SK-N-SH (cell line): ENCODE measurements at regions of chr7 and their contacts with region 1.

Region 1: DNA sequence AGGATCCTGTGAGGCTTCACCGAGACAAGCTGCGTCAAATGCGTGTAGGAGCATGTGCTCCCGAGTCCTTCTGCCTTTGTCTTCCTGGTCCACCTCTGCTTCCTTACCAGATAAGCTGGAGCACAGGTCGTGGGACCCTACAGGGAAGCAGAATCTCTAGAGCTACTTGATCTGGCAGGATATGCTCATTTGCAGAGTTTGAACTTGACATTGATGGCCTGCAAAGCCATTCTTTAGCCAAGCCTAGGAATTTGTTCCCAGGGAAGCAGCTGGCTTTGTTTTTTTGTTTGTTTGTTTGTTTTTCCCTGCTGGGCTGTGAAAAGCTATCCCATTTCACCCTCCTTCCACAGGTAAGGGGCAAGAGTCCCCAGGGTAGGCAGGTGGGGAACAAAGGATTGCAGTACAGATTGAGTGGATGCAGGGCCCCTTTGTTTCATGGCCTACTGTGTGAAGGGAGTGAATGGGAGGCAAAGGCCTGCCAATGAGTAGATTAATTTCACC is 200.0 kb upstream of the BMPER start:
- DNase-seq: no peak
- H3K4me3 ChIP-seq: no peak overlapping the region
- H3K27ac ChIP-seq: no peak overlapping the region
- H3K4me1 ChIP-seq: peaks cover 0 to 10% of the 10 kb centered on the region in 2 experiments; a peak in 2 of 4 replicates
- H3K27me3 ChIP-seq: no peaks in the 10 kb centered on the region
- CTCF ChIP-seq: no peak
- EP300 ChIP-seq: no peak
- RAD21 ChIP-seq: no peak

Region 2: GRCh38 chr7:33716581-33717477 is 11.4 kb after region 1 on chr7:
- CTCF ChIA-PET with region 1: interaction called, 23 read pairs
- POLR2A ChIA-PET with region 1: no interaction called
- DNase-seq: no peak
- H3K4me3 ChIP-seq: no peak overlapping the region
- H3K27ac ChIP-seq: no peak overlapping the region
- H3K4me1 ChIP-seq: peaks cover 0 to 2% of the 10 kb centered on the region in 2 experiments; a peak in 2 of 4 replicates
- H3K27me3 ChIP-seq: no peaks in the 10 kb centered on the region
- CTCF ChIP-seq: peak; percentile 98
- EP300 ChIP-seq: no peak
- RAD21 ChIP-seq: peak; percentile 77